Calu3 (cell line): ENCODE measurements at regions of chr3 and their contacts with region 1.

Region 1: DNA sequence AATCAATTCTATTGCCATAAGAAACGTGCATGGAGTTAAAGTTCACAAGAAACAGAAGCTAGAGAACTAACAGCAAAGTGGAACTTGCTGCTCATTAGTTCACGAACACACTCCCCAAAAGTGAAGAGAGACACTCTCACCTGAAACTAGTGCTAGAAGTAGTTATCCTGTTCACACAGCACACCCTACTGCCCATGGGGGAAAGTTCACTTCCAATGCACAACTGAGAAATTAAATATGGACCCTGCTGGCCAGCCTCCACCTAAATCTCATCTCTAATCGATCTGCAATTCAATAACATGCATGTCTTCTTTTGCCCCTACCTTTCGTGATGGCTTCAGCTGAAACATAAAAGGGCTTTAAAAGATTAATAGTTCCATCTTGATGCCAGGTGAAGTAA is 39.4 kb upstream of the FRMD4B start:
- DNase-seq: peak; percentile 50
- H3K4me3 Mint-ChIP-seq: no peak overlapping the region
- H3K27ac Mint-ChIP-seq: no peak overlapping the region
- H3K4me1 Mint-ChIP-seq: peaks cover 7% of the 10 kb centered on the region
- H3K27me3 Mint-ChIP-seq: no peaks in the 10 kb centered on the region
- CTCF ChIP-seq: peak; percentile 43

Region 2: GRCh38 chr3:69120879-69121464 is 304.3 kb before region 1 on chr3:
- CTCF ChIA-PET with region 1: interaction called, 3 read pairs
- intact Hi-C with region 1: loop called (anchors 1 kb)
- DNase-seq: peak; percentile 85
- H3K4me3 Mint-ChIP-seq: no peak overlapping the region
- H3K27ac Mint-ChIP-seq: no peak overlapping the region
- H3K4me1 Mint-ChIP-seq: peaks cover 29% of the 10 kb centered on the region
- H3K27me3 Mint-ChIP-seq: no peaks in the 10 kb centered on the region
- CTCF ChIP-seq: peak; percentile 60

Region 3: DNA sequence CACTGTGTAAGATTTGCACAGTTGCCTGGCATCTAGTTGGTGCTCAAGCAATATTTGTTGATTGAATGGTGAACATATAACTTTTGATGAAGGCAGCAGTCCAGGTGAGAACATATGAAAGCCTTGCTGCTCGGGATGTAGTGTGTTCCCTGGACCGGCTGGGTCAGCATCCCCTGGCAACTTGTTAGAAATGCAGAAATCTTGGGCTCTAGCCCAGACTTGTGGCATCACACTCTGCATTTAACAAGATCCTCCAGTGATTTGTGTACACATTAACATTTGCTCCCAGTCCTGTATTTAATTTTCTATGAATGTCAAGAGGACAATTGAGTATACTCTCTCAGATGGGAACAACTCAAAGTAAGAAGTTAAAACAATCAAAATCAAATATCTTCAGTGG is 505.3 kb after region 1 on chr3:
- CTCF ChIA-PET with region 1: no interaction called
- intact Hi-C with region 1: no loop called
- DNase-seq: no peak
- H3K4me3 Mint-ChIP-seq: no peak overlapping the region
- H3K27ac Mint-ChIP-seq: no peak overlapping the region
- H3K4me1 Mint-ChIP-seq: peaks cover 7% of the 10 kb centered on the region
- H3K27me3 Mint-ChIP-seq: no peaks in the 10 kb centered on the region
- CTCF ChIP-seq: no peak